Transverse colon (tissue), 4 donors: ENCODE measurements at regions of chr11 and their contacts with region 1.

Region 1: GRCh38 chr11:122101625-122102291 is 14.3 kb downstream of the BLID start:
- DNase-seq: peak; percentile 28
- H3K4me3 ChIP-seq: peak overlapping the region; percentile 14 to 41 (median 32)
- H3K27ac ChIP-seq: peak overlapping the region; percentile 69 to 87 (median 75)
- H3K4me1 ChIP-seq: peaks cover 0 to 5% (median 0%) of the 10 kb centered on the region in 4 donors
- H3K27me3 ChIP-seq: peaks cover 42% of the 10 kb centered on the region
- CTCF ChIP-seq: peak in 4 of 5 experiments; percentile 10 to 46 (median 23)
- EP300 ChIP-seq: no peak
- POLR2A ChIP-seq: no peak

Region 2: GRCh38 chr11:122202951-122203456 is 101.2 kb after region 1 on chr11:
- in situ Hi-C with region 1: no loop called
- intact Hi-C with region 1: loop called (anchors 5 kb)
- DNase-seq: peak; percentile 40
- H3K4me3 ChIP-seq: peak overlapping the region in 3 of 4 donors; percentile 18 to 33 (median 19)
- H3K27ac ChIP-seq: peak overlapping the region; percentile 31 to 50 (median 44)
- H3K4me1 ChIP-seq: peaks cover 0 to 24% (median 13%) of the 10 kb centered on the region in 4 donors
- H3K27me3 ChIP-seq: peaks cover 12% of the 10 kb centered on the region
- CTCF ChIP-seq: peak; percentile 78 to 94 (median 91)
- EP300 ChIP-seq: no peak
- POLR2A ChIP-seq: no peak